ENCODE measurements at regions of chr11 and their contacts with region 1.

Region 1: GRCh38 chr11:123357961-123358841 is 71.9 kb upstream of the GRAMD1B start:
- DNase-seq: peak; percentile 43
- H3K4me3 Mint-ChIP-seq: peak overlapping the region; percentile 96
- H3K27ac Mint-ChIP-seq: peak overlapping the region; percentile 76
- H3K4me1 Mint-ChIP-seq: peaks cover 51% of the 10 kb centered on the region
- H3K27me3 Mint-ChIP-seq: peaks cover 1% of the 10 kb centered on the region

Region 2: DNA sequence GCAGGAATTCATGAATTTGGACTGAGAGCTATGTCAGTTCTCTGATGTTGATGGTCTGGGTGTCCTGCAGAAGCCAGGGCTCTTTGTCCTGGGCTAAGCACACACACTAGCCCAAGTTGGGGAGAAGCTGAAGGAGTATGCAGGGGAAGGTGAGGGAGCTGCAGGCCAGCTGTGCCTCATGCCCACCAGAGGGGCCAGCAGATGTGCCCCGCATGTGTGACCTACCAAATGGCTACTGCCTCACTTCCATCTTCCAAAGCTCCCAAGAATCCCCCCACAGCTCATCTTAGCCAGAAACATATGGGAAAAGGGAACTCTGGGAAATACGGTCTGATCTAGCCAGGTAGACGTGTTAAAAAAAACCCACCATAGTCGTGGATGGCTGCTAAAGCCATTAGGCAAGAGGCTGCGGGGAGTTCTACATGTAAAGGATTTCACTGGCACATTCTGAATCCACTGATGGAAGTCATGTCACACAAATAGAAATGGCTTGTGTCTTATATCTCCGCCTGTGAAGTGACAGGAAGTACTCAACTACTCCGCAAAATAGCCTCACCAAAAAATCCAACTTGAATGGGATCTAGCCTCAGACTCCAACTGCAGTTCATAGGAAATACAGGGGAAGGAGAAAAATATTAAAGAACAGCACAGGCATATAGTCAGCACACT is 66.9 kb before region 1 on chr11:
- intact Hi-C with region 1: no loop called
- DNase-seq: no peak
- H3K4me3 Mint-ChIP-seq: no peak overlapping the region
- H3K27ac Mint-ChIP-seq: no peak overlapping the region
- H3K4me1 Mint-ChIP-seq: no peaks in the 10 kb centered on the region
- H3K27me3 Mint-ChIP-seq: peaks cover 19% of the 10 kb centered on the region

Region 3: GRCh38 chr11:123301696-123302400 is 56.4 kb before region 1 on chr11:
- intact Hi-C with region 1: loop called (anchors 1 kb)
- DNase-seq: peak; percentile 67
- H3K4me3 Mint-ChIP-seq: peak overlapping the region; percentile 58
- H3K27ac Mint-ChIP-seq: peak overlapping the region; percentile 84
- H3K4me1 Mint-ChIP-seq: peaks cover 45% of the 10 kb centered on the region
- H3K27me3 Mint-ChIP-seq: peaks cover 2% of the 10 kb centered on the region

Region 4: GRCh38 chr11:123338330-123339005 is 19.7 kb before region 1 on chr11:
- intact Hi-C with region 1: loop called (anchors 1 kb)
- DNase-seq: no peak
- H3K4me3 Mint-ChIP-seq: no peak overlapping the region
- H3K27ac Mint-ChIP-seq: no peak overlapping the region
- H3K4me1 Mint-ChIP-seq: peaks cover 15% of the 10 kb centered on the region
- H3K27me3 Mint-ChIP-seq: peaks cover 6% of the 10 kb centered on the region

Region 5: DNA sequence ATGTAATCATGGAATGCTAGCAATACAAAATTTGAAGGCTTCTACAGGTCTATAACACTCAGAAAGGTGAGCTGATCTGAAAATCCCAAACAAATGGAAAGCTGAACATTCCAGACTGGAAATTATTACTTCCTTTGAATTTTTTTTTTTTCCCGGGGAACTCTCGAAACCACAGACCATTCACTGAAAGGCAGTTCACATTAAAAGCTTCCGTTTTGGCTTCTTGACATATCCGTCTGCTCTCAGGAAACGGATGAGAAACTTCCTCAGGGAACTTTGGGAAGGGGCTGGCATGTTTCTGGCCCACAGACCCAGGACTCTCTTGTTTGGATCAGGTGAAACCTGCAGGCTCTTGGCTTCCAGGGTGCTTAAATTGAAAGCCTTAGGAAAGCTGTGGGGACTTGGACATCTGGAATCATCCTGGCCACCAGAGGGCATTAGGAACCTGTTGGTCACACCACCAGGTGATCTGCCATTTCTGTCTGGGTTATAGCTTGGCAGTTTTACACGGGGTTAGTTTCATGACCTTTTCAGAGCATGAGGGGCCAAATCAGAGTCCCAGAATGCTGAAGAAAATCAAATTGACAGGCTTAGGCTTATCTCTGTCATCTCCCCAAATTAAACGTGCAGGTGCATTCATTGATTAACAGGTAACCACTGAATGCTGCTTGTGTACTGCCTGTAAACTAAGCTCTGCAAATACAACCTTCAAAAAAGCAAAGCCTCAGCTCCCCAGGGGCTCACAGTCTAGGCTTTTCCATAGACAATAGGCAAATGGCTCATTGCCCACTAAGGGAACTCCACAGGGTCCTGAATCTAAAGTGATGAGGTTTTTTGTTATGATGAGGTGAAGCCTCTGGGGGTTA is 49.2 kb after region 1 on chr11:
- intact Hi-C with region 1: loop called (anchors 1 kb)
- DNase-seq: peak; percentile 30
- H3K4me3 Mint-ChIP-seq: peak overlapping the region; percentile 66
- H3K27ac Mint-ChIP-seq: peak overlapping the region; percentile 56
- H3K4me1 Mint-ChIP-seq: peaks cover 43% of the 10 kb centered on the region
- H3K27me3 Mint-ChIP-seq: no peaks in the 10 kb centered on the region

Region 6: DNA sequence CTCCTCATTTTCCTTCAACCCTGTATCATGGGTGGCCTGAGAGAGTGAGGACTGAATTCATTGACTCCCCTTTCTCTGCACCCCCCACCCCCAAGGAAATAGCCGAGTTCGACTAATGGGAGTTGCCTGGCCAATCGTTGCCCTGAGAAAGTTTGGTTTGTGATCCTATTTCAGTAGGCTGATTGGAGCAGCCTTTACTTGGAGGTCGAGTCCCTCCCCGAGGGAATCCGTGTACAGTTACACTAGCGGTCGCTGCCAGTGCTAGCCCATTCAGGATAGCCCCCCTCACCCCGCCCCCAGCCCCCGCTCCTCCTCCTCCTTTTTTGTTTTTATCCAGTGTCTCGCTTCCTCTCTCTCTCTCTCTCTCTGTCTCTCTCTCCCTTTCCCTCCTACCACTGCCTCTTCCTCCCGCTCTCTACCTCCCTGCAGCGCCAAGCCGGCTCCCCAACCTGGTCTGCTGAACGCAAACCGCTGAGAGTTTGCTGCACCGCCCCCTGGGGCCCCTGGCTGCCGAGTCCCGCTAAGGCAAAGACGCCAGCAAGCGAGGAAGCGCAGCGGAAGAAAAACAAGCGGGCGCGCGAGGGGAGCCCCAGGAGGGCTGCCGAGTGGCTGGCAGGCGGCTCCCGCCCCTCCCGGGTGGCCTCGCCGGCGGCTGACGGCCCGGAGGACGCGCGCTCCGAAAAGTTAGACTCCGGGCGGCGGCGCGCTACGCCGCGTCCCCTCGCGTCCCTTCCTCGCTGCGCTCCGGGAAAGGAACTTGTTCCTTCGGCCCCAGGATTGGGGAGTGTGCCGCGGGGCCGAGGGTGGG is 71.9 kb after region 1 on chr11 and contains the start of gene GRAMD1B:
- intact Hi-C with region 1: loop called (anchors 2 kb)
- DNase-seq: peak; percentile 80
- H3K4me3 Mint-ChIP-seq: peak within 1 kb of the TSS; percentile 91
- H3K27ac Mint-ChIP-seq: peak within 1 kb of the TSS; percentile 86
- H3K4me1 Mint-ChIP-seq: peaks cover 44% of the 10 kb centered on the region
- H3K27me3 Mint-ChIP-seq: no peaks in the 10 kb centered on the region
- total RNA-seq, gene GRAMD1B: 159 and 166 TPM in 2 replicates

Region 7: DNA sequence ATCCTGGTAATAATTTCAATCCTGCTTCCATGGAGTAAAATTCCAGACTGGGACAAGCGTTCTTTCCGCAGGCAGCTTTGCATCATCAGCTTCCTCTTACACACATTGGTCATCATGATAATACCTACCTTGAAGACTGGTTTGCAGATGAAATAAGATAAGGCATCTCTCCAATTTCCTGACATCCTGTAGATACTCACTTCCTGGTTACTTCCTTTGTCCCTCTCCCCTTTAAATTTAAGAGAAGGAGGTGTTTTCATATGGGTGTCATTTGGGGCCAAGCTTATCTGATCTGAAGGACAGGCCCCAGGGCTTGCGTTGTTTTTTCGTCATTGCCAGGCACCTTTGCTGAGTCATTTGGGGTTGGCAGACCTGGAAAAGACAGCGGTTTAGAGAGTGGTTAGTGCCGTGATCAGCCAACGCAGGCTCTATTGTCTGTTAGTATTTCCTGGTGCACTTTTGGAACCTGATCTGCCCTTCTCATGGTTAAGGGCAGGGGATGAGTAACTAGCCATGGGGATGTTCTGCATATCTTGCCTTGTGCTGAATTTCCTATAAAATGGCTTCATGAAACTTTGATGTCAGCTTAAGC is 96.0 kb after region 1 on chr11:
- intact Hi-C with region 1: loop called (anchors 1 kb)
- DNase-seq: peak; percentile 73
- H3K4me3 Mint-ChIP-seq: peak overlapping the region; percentile 84
- H3K27ac Mint-ChIP-seq: peak overlapping the region; percentile 97
- H3K4me1 Mint-ChIP-seq: peaks cover 88% of the 10 kb centered on the region
- H3K27me3 Mint-ChIP-seq: no peaks in the 10 kb centered on the region

Region 8: GRCh38 chr11:123478352-123478987 is 120.3 kb after region 1 on chr11:
- intact Hi-C with region 1: loop called (anchors 2 kb)
- DNase-seq: no peak
- H3K4me3 Mint-ChIP-seq: no peak overlapping the region
- H3K27ac Mint-ChIP-seq: peak overlapping the region; percentile 60
- H3K4me1 Mint-ChIP-seq: peaks cover 51% of the 10 kb centered on the region
- H3K27me3 Mint-ChIP-seq: no peaks in the 10 kb centered on the region